ENCODE measurements at regions of chr3 and their contacts with region 1.

Region 1: DNA sequence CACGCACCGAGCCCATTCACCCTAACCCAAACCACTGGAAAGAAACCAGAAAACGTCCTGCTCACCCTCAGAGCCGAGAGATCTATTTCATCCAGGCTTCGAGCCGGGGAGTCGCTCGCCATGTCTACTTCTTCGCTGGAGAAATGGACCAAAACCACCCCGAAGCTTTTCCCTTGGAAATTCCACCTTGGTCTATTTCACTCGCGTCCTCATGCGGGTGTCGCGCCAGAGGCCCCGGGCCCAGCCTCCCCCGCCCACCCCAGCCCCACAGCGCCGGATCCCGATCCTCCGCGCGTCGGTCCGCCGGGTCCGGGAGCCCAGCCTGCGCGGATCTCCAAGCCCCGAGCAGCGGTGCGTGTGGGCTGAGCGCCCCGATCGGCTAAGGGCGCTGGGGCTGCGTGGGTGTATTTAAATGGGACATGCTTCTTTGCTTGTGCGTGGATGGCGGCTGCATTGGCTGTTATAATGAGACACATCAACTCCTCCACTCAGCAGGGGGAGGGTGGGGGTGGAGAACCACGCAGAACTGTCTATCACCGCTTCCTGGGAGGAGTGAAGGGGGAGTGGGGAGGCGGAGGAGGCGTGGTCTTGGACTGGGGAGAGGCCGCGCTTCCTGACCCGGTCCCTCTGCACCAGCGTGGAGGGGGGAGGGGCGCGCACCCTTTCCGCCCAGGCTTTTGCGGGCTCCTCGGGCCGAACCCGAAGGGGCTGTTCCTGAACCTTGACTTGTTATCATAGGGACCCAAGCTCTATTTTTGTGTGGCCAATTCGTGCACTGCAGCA is at the start of gene TNIK:
- DNase-seq: peak; percentile 73 to 99 (median 91)
- ATAC-seq: peak; percentile 92
- H3K4me3 ChIP-seq: peak within 1 kb of the TSS; percentile 87
- H3K4me3 Mint-ChIP-seq: peak within 1 kb of the TSS; percentile 91 to 98 (median 94)
- H3K27ac ChIP-seq: peak within 1 kb of the TSS; percentile 81
- H3K27ac Mint-ChIP-seq: peak within 1 kb of the TSS; percentile 88 to 96 (median 91)
- H3K4me1 ChIP-seq: peaks cover 15 to 29% of the 10 kb centered on the region in 2 donors
- H3K4me1 Mint-ChIP-seq: peaks cover 19 to 46% (median 45%) of the 10 kb centered on the region in 7 donors
- H3K27me3 ChIP-seq: no peaks in the 10 kb centered on the region
- H3K27me3 Mint-ChIP-seq: no peaks in the 10 kb centered on the region
- total RNA-seq, gene TNIK: 61.6 to 74.9 (median 73.6) TPM

Region 2: GRCh38 chr3:170869645-170870593 is 590.2 kb before region 1 on chr3 and contains the start of gene RPL22L1:
- CTCF ChIA-PET with region 1: no interaction called
- POLR2A ChIA-PET with region 1: no interaction called
- intact Hi-C with region 1: loop called in 1 of 2 experiments (anchors 1 kb)
- DNase-seq: peak; percentile 83 to 92 (median 90)
- ATAC-seq: peak; percentile 96
- H3K4me3 ChIP-seq: peak within 1 kb of the TSS; percentile 84
- H3K4me3 Mint-ChIP-seq: peak within 1 kb of the TSS; percentile 93 to 98 (median 94)
- H3K27ac ChIP-seq: peak within 1 kb of the TSS; percentile 86
- H3K27ac Mint-ChIP-seq: peak within 1 kb of the TSS; percentile 96 to 99 (median 98)
- H3K4me1 ChIP-seq: peaks cover 22% of the 10 kb centered on the region in 2 donors
- H3K4me1 Mint-ChIP-seq: peaks cover 10 to 41% (median 26%) of the 10 kb centered on the region in 7 donors
- H3K27me3 ChIP-seq: no peaks in the 10 kb centered on the region
- H3K27me3 Mint-ChIP-seq: peaks cover 0 to 4% (median 0%) of the 10 kb centered on the region in 5 donors
- total RNA-seq, gene RPL22L1: 27.5 to 62.6 (median 47.9) TPM

Region 3: DNA sequence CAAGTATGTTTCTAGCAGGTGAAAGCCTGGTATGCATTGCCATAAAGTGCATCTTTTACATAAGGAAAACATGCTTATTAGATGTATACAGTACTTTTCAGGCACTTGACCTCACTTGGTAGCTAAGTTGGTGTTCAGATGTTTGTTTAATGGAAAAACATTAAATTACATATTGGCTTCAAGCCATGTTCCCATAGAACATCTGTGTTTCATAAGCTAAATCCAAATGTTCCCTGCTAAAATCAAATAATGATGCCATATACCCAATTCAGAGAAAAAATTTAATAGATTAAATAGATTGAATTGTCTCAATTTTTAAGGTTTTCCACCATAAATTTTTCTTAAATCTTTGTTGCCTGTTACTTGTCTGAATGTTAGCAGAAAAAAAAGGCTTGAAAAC is 571.0 kb before region 1 on chr3:
- CTCF ChIA-PET with region 1: no interaction called
- POLR2A ChIA-PET with region 1: no interaction called
- intact Hi-C with region 1: no loop called
- DNase-seq: no peak
- ATAC-seq: no peak
- H3K4me3 ChIP-seq: no peak overlapping the region
- H3K4me3 Mint-ChIP-seq: no peak overlapping the region
- H3K27ac ChIP-seq: no peak overlapping the region
- H3K27ac Mint-ChIP-seq: no peak overlapping the region
- H3K4me1 ChIP-seq: no peaks in the 10 kb centered on the region
- H3K4me1 Mint-ChIP-seq: no peaks in the 10 kb centered on the region
- H3K27me3 ChIP-seq: no peaks in the 10 kb centered on the region
- H3K27me3 Mint-ChIP-seq: peaks cover 5 to 23% (median 10%) of the 10 kb centered on the region in 5 donors

Region 4: GRCh38 chr3:171248425-171249111 is 211.6 kb before region 1 on chr3:
- CTCF ChIA-PET with region 1: interaction called, 3 read pairs
- POLR2A ChIA-PET with region 1: interaction called, 19 read pairs
- intact Hi-C with region 1: loop called in 1 of 2 experiments (anchors 1 kb)
- DNase-seq: peak in 1 of 9 donors; percentile 18
- ATAC-seq: peak; percentile 60
- H3K4me3 ChIP-seq: peak overlapping the region; percentile 30
- H3K4me3 Mint-ChIP-seq: no peak overlapping the region
- H3K27ac ChIP-seq: peak overlapping the region; percentile 43
- H3K27ac Mint-ChIP-seq: no peak overlapping the region
- H3K4me1 ChIP-seq: peaks cover 38 to 53% of the 10 kb centered on the region in 2 donors
- H3K4me1 Mint-ChIP-seq: peaks cover 22 to 40% (median 33%) of the 10 kb centered on the region in 7 donors
- H3K27me3 ChIP-seq: no peaks in the 10 kb centered on the region
- H3K27me3 Mint-ChIP-seq: no peaks in the 10 kb centered on the region

Region 5: DNA sequence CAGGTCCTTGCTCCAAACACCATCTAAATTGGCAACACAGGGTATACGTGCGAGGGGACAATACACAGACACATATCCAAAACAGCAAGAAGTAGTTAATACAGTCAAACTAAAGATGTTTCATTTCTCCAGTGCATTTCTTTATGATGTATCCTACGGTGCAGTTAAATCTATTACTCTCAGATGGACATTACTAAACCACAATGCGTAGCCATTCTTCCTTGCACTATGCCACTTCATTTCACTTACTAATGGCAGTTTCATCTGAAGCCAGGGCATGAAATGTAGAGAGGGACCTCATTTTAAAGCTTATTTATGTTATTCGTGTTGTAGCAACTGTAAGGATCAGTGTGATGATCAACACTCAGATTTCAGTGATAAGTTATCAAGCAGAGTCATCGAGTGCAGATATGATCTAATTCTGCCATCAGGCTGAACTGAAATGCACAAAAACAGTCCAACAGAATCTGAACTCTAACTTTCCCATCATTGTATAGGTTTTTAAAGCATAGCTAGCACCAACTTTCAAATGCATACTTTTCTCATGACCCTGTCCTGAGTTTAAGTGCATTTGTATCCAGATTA is 14.4 kb before region 1 on chr3:
- CTCF ChIA-PET with region 1: no interaction called
- POLR2A ChIA-PET with region 1: interaction called, 4 read pairs
- intact Hi-C with region 1: loop called in 1 of 2 experiments (anchors 1 kb)
- DNase-seq: no peak
- ATAC-seq: peak; percentile 61
- H3K4me3 ChIP-seq: no peak overlapping the region
- H3K4me3 Mint-ChIP-seq: peak overlapping the region in 3 of 10 donors; percentile 3 to 32 (median 13)
- H3K27ac ChIP-seq: no peak overlapping the region
- H3K27ac Mint-ChIP-seq: peak overlapping the region in 4 of 9 donors; percentile 1 to 52 (median 41)
- H3K4me1 ChIP-seq: peaks cover 15 to 19% of the 10 kb centered on the region in 2 donors
- H3K4me1 Mint-ChIP-seq: peaks cover 42 to 82% (median 75%) of the 10 kb centered on the region in 7 donors
- H3K27me3 ChIP-seq: no peaks in the 10 kb centered on the region
- H3K27me3 Mint-ChIP-seq: no peaks in the 10 kb centered on the region

Region 6: GRCh38 chr3:171566803-171567422 is 106.8 kb after region 1 on chr3:
- CTCF ChIA-PET with region 1: interaction called, 3 read pairs
- POLR2A ChIA-PET with region 1: interaction called, 3 read pairs
- intact Hi-C with region 1: loop called (anchors 1 kb)
- DNase-seq: peak in 7 of 9 donors; percentile 22 to 67 (median 54)
- ATAC-seq: peak; percentile 72
- H3K4me3 ChIP-seq: no peak overlapping the region
- H3K4me3 Mint-ChIP-seq: no peak overlapping the region
- H3K27ac ChIP-seq: no peak overlapping the region
- H3K27ac Mint-ChIP-seq: peak overlapping the region in 1 of 9 donors; percentile 44
- H3K4me1 ChIP-seq: peaks cover 0 to 4% of the 10 kb centered on the region in 2 donors
- H3K4me1 Mint-ChIP-seq: peaks cover 3 to 38% (median 6%) of the 10 kb centered on the region in 7 donors
- H3K27me3 ChIP-seq: no peaks in the 10 kb centered on the region
- H3K27me3 Mint-ChIP-seq: peaks cover 0 to 32% (median 0%) of the 10 kb centered on the region in 5 donors

Region 7: GRCh38 chr3:172750368-172751174 is 1290.4 kb after region 1 on chr3 and contains the start of gene ECT2:
- CTCF ChIA-PET with region 1: no interaction called
- POLR2A ChIA-PET with region 1: no interaction called
- intact Hi-C with region 1: loop called (anchors 2 to 5 kb)
- DNase-seq: peak; percentile 87 to 98 (median 94)
- ATAC-seq: peak; percentile 98
- H3K4me3 ChIP-seq: peak within 1 kb of the TSS; percentile 88
- H3K4me3 Mint-ChIP-seq: peak within 1 kb of the TSS; percentile 88 to 100 (median 96)
- H3K27ac ChIP-seq: peak within 1 kb of the TSS; percentile 63
- H3K27ac Mint-ChIP-seq: peak within 1 kb of the TSS; percentile 52 to 98 (median 85)
- H3K4me1 ChIP-seq: peaks cover 5% of the 10 kb centered on the region in 2 donors
- H3K4me1 Mint-ChIP-seq: peaks cover 6 to 45% (median 15%) of the 10 kb centered on the region in 7 donors
- H3K27me3 ChIP-seq: no peaks in the 10 kb centered on the region
- H3K27me3 Mint-ChIP-seq: peaks cover 0 to 8% (median 0%) of the 10 kb centered on the region in 5 donors
- total RNA-seq, gene ECT2: 1.3 to 41.2 (median 2.1) TPM

Measured in naive thymus-derived CD4-positive, alpha-beta T cell (primary cell).